Esophagus muscularis mucosa (tissue), 4 donors: ENCODE measurements at regions of chr11 and their contacts with region 1.

Region 1: GRCh38 chr11:85854557-85855340 is 434 bp upstream of the CCDC83 start:
- DNase-seq: peak; percentile 96
- H3K4me3 ChIP-seq: peak overlapping the region; percentile 57 to 64 (median 59)
- H3K27ac ChIP-seq: peak overlapping the region; percentile 75 to 82 (median 80)
- H3K4me1 ChIP-seq: peaks cover 7 to 14% (median 8%) of the 10 kb centered on the region in 4 donors
- H3K27me3 ChIP-seq: no peaks in the 10 kb centered on the region
- CTCF ChIP-seq: peak; percentile 95 to 99 (median 97)
- EP300 ChIP-seq: no peak
- POLR2A ChIP-seq: no peak

Region 2: DNA sequence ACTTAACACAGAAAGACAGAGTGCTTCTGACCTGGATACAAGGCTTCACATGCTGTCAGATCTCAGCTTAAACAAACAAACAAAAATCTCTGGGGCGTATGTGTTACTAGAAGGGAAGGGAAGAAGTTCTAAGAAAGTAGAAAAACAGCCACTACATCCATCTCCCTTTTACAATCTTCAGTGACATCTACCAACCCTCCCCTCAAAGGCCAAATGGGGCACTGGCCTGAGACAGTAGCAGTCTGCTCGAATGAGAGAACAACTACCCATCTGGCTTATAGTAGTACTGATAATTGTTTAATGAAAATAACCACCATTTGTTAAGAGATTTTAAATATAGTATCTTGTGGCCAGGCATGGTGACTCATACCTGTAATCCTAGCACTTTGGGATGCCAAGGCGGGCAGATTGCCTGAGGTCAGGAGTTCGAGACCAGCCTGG is 29.9 kb after region 1 on chr11:
- intact Hi-C with region 1: no loop called
- DNase-seq: no peak
- H3K4me3 ChIP-seq: no peak overlapping the region
- H3K27ac ChIP-seq: no peak overlapping the region
- H3K4me1 ChIP-seq: peaks cover 0 to 4% (median 0%) of the 10 kb centered on the region in 4 donors
- H3K27me3 ChIP-seq: no peaks in the 10 kb centered on the region
- CTCF ChIP-seq: no peak
- EP300 ChIP-seq: no peak
- POLR2A ChIP-seq: no peak

Region 3: GRCh38 chr11:86003654-86004053 is 148.9 kb after region 1 on chr11:
- intact Hi-C with region 1: no loop called
- DNase-seq: no peak
- H3K4me3 ChIP-seq: no peak overlapping the region
- H3K27ac ChIP-seq: no peak overlapping the region
- H3K4me1 ChIP-seq: no peaks in the 10 kb centered on the region
- H3K27me3 ChIP-seq: no peaks in the 10 kb centered on the region
- CTCF ChIP-seq: no peak
- EP300 ChIP-seq: no peak
- POLR2A ChIP-seq: no peak

Region 4: DNA sequence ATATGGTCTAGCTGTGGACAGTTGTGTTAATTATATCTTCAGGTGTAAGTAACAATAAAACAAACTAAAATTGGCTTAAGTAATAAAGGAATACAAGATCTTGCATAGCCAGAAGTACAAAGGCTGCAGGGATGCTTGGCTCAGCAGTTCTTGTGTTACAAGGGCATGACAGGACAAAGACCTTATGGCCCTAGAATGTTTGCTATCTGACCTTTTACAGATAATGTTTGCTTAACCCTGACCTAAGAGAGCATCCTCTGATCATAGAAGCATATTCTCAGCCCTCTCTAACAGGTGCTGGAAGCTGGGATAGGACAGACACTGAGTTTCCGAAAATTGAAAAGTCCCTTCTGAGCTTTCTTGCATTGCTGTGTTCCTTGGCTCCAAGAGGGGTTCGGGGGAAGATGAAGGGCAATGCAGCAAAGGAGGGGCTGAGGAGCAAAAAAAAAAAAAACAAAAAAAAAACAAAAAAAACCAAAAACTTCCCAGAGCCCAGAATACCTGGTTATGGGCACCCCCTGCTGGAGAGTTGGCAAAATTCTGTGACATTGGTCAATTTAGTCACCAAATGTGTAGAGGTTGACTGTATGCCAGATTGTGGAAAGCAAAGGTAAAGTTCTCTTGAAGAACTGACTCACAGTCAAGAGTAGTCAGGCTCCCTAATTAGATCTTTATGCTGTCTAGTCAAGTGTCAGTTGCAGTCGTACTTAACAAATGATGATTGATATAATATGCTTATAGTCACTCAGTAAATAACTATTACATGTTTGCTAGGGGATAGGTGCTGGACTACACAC is 436.9 kb after region 1 on chr11:
- intact Hi-C with region 1: loop called (anchors 10 kb)
- DNase-seq: no peak
- H3K4me3 ChIP-seq: no peak overlapping the region
- H3K27ac ChIP-seq: no peak overlapping the region
- H3K4me1 ChIP-seq: peaks cover 0 to 2% (median 0%) of the 10 kb centered on the region in 4 donors
- H3K27me3 ChIP-seq: no peaks in the 10 kb centered on the region
- CTCF ChIP-seq: peak; percentile 32 to 64 (median 38)
- EP300 ChIP-seq: no peak
- POLR2A ChIP-seq: no peak